ENCODE measurements at regions of chr7 and their contacts with region 1.

Region 1: GRCh38 chr7:88219781-88220747 is at the start of gene SRI:
- DNase-seq: peak; percentile 94
- ATAC-seq: peak; percentile 97
- H3K4me3 Mint-ChIP-seq: peak within 1 kb of the TSS; percentile 95
- H3K27ac Mint-ChIP-seq: peak within 1 kb of the TSS; percentile 95
- H3K4me1 Mint-ChIP-seq: peaks cover 24% of the 10 kb centered on the region
- H3K27me3 Mint-ChIP-seq: no peaks in the 10 kb centered on the region
- total RNA-seq, gene SRI: 157 to 193 TPM

Region 2: DNA sequence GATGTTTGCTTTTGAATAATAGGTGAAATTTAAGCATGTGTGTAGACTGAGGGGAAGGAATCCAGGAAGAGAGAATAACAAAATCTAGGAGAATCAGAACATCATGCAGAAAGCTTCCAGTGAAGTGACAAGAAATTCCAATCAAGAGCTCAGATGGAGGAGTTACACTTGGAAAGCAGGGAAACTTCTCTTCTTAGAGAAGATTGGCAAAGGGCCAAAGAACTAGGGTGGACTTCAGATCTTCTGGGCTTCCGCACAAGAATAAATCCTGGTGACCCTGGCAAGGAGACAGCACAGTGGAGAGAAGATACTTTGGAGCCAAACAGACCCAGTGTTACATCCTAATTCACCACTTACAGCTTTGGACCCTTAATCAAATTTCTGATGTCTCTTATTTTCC is 967.9 kb before region 1 on chr7:
- CTCF ChIA-PET with region 1: no interaction called
- POLR2A ChIA-PET with region 1: no interaction called
- intact Hi-C with region 1: no loop called
- DNase-seq: no peak
- ATAC-seq: no peak
- H3K4me3 Mint-ChIP-seq: no peak overlapping the region
- H3K27ac Mint-ChIP-seq: no peak overlapping the region
- H3K4me1 Mint-ChIP-seq: no peaks in the 10 kb centered on the region
- H3K27me3 Mint-ChIP-seq: peaks cover 18% of the 10 kb centered on the region

Region 3: DNA sequence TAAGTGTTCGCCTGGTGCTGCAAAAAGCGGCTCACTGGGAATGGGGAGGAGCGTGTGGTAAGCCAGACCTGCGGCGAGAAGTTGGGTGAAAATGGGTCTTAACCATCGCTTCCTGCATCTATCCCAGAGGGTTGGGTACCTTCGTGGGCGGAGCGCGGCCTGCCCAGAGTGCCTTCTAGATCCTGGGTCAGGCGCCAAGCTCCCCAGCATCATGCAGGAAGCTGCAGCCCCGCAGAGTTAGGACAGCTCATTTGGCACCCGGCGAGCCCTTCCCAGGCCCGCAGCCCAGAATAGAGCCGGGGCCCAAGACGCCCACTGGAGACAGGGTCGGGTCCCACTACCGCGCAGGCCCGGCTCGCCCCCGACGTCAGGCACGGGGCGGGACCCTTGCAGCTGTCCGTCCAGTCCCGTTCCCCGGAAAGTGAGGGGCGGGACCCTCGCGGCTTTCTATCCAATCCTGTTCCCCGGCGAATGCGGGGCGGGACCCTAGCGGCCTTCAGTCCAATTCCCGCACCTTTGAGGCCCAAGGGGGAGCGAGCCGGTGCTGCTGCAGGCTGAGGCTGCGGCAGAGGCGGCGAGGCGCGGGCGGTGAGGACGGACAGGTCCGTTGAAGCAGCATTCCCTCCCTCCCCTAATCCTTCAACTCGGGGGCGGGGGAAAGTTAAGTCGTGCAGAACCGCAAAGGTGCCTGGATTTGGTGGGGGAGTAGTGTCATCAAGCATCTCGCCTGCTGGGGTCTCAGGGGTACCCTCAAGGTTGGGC is 874.7 kb before region 1 on chr7 and contains the start of gene CROT:
- CTCF ChIA-PET with region 1: no interaction called
- POLR2A ChIA-PET with region 1: no interaction called
- intact Hi-C with region 1: loop called in 1 of 2 experiments (anchors 5 kb)
- DNase-seq: peak; percentile 97
- ATAC-seq: peak; percentile 98
- H3K4me3 Mint-ChIP-seq: peak within 1 kb of the TSS; percentile 94
- H3K27ac Mint-ChIP-seq: peak within 1 kb of the TSS; percentile 95
- H3K4me1 Mint-ChIP-seq: peaks cover 45% of the 10 kb centered on the region
- H3K27me3 Mint-ChIP-seq: no peaks in the 10 kb centered on the region
- total RNA-seq, gene CROT: 4.6 to 7.0 TPM

Region 4: GRCh38 chr7:87933945-87934698 is 285.9 kb before region 1 on chr7 and contains the start of gene ADAM22:
- CTCF ChIA-PET with region 1: interaction called, 3 read pairs
- POLR2A ChIA-PET with region 1: no interaction called
- intact Hi-C with region 1: loop called in 1 of 2 experiments (anchors 2 kb)
- DNase-seq: peak; percentile 89
- ATAC-seq: peak; percentile 98
- H3K4me3 Mint-ChIP-seq: peak within 1 kb of the TSS; percentile 81
- H3K27ac Mint-ChIP-seq: peak within 1 kb of the TSS; percentile 81
- H3K4me1 Mint-ChIP-seq: peaks cover 9% of the 10 kb centered on the region
- H3K27me3 Mint-ChIP-seq: peaks cover 5% of the 10 kb centered on the region
- total RNA-seq, gene ADAM22: 1.1 to 1.8 TPM

Region 5: DNA sequence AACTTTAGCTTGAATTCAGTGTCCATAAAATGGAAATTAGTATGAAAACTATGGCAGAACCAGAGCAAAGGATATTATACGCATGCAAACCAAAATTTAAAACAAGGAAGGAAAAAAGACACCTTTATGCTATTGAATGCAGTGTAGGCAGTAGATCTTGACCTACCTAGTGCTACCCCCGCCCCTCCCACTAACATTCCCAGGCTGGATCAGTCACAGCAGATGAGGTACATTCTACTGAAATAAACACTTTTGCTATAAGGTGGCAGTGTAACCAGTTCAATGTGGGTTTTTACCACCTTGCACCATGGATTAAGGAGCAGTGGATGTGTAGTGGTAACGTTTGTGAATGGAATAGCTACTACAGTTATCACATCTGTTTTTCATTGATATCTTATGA is 28.2 kb before region 1 on chr7:
- CTCF ChIA-PET with region 1: no interaction called
- POLR2A ChIA-PET with region 1: no interaction called
- intact Hi-C with region 1: no loop called
- DNase-seq: no peak
- ATAC-seq: no peak
- H3K4me3 Mint-ChIP-seq: no peak overlapping the region
- H3K27ac Mint-ChIP-seq: no peak overlapping the region
- H3K4me1 Mint-ChIP-seq: no peaks in the 10 kb centered on the region
- H3K27me3 Mint-ChIP-seq: no peaks in the 10 kb centered on the region

Measured in activated CD4-positive, alpha-beta T cell treated with anti-CD3 and anti-CD28 coated beads for 36 hours (primary cell).